Activated naive CD4-positive, alpha-beta T cell treated with anti-CD3 and anti-CD28 coated beads for 36 hours (primary cell): ENCODE measurements at regions of chr12 and their contacts with region 1.

Region 1: GRCh38 chr12:49707128-49707811 is at the start of gene FMNL3:
- DNase-seq: peak; percentile 98
- H3K4me3 Mint-ChIP-seq: peak within 1 kb of the TSS; percentile 89
- H3K27ac Mint-ChIP-seq: peak within 1 kb of the TSS; percentile 85
- H3K4me1 Mint-ChIP-seq: peaks cover 45% of the 10 kb centered on the region
- H3K27me3 Mint-ChIP-seq: peaks cover 2% of the 10 kb centered on the region
- total RNA-seq, gene FMNL3: 20.0 to 20.7 TPM

Region 2: GRCh38 chr12:49366652-49367380 is 340.5 kb before region 1 on chr12:
- CTCF ChIA-PET with region 1: no interaction called
- intact Hi-C with region 1: loop called (anchors 5 kb)
- DNase-seq: peak; percentile 90
- H3K4me3 Mint-ChIP-seq: peak overlapping the region; percentile 95
- H3K27ac Mint-ChIP-seq: peak overlapping the region; percentile 95
- H3K4me1 Mint-ChIP-seq: peaks cover 23% of the 10 kb centered on the region
- H3K27me3 Mint-ChIP-seq: no peaks in the 10 kb centered on the region

Region 3: DNA sequence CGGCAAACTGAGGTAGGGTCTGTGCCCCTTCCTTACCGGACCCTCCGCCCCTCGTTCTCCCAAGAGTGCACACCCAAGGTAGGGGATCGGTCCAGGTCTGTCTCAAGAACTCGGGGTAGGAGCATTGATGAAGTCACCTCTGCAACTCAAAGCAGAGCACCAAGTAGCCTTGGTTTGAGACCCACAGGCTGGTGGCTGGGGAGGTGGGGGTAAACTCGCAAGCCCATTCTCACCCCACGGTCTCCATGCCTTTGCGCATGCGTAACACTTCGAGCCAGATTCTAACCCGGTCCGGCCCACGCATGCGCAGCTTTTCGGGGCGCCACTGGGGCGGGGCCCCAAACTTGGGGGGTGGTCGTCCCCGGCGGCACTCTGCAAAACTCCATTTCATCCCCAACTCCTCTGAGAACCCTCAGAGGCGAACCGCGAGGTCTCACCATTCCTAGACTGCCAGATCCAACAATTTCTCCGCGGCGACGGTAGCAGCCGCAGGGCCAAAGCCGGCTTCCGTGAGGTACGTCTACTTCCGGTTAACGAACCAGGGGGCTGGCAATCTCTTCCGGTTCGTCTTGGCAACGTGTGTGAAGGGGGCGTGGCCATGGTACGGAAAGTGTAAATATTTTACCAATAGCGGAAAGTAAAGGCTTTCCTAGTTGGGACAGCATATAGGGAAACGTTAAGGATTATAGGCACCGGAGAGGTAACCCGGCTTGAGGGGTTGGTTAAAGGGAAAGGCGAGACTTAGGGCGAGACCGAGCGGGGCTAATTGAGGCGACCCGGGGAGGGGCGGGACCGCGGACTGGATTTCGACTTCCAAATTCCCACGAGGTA is 139.4 kb before region 1 on chr12 and contains the start of gene MCRS1:
- CTCF ChIA-PET with region 1: interaction called, 5 read pairs
- intact Hi-C with region 1: loop called (anchors 5 kb)
- DNase-seq: peak; percentile 91
- H3K4me3 Mint-ChIP-seq: peak within 1 kb of the TSS; percentile 99
- H3K27ac Mint-ChIP-seq: peak within 1 kb of the TSS; percentile 98
- H3K4me1 Mint-ChIP-seq: peaks cover 50% of the 10 kb centered on the region
- H3K27me3 Mint-ChIP-seq: no peaks in the 10 kb centered on the region
- total RNA-seq, gene MCRS1: 49.8 to 52.7 TPM

Region 4: GRCh38 chr12:49644620-49644994 is 62.7 kb before region 1 on chr12:
- CTCF ChIA-PET with region 1: interaction called, 450 read pairs
- intact Hi-C with region 1: loop called (anchors 1 kb)
- DNase-seq: peak; percentile 90
- H3K4me3 Mint-ChIP-seq: no peak overlapping the region
- H3K27ac Mint-ChIP-seq: peak overlapping the region; percentile 71
- H3K4me1 Mint-ChIP-seq: peaks cover 29% of the 10 kb centered on the region
- H3K27me3 Mint-ChIP-seq: no peaks in the 10 kb centered on the region

Region 5: DNA sequence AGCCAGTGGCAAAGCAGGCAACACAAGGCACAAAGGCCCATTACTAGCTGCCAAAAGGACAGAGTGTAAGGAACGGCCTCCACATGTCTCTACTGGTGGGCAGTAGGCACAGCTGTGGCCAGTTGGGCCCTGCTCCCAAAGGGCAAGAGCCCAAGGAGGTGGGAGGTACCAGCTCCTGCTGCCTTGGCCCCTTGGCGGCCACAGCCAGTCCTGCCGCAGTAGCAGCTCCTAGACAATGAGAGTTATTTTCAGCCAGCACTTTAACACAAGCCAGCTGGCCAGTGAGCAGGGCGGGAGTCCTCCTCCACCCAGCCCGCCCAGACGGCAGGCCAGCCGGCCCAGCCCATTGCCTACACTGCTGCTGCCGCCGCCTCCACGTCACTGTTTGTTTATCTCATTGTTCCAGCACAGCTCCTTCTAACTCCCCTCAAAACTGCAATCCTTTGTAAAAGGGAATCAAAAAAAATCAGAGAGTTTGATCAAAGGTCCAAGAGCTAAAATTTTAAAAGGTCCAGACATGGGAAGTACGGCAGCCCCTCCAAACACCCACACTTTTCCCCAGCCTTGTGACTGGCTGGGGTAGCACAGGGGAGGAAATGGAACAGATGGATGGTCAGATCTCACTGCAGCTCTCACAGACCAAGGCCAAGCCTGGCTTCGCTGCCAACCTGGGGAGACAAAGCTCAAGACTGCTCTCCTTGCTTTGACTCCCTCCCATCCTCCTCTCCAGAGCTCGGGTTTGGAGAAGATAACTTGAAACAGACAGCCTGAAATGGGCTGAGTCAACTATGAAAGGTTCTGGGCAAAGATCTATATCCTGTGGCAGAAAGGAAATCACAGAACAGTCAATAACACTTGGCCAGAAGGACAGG is 33.6 kb before region 1 on chr12:
- CTCF ChIA-PET with region 1: interaction called, 54 read pairs
- intact Hi-C with region 1: loop called (anchors 1 kb)
- DNase-seq: no peak
- H3K4me3 Mint-ChIP-seq: no peak overlapping the region
- H3K27ac Mint-ChIP-seq: peak overlapping the region; percentile 98
- H3K4me1 Mint-ChIP-seq: peaks cover 85% of the 10 kb centered on the region
- H3K27me3 Mint-ChIP-seq: no peaks in the 10 kb centered on the region

Region 6: DNA sequence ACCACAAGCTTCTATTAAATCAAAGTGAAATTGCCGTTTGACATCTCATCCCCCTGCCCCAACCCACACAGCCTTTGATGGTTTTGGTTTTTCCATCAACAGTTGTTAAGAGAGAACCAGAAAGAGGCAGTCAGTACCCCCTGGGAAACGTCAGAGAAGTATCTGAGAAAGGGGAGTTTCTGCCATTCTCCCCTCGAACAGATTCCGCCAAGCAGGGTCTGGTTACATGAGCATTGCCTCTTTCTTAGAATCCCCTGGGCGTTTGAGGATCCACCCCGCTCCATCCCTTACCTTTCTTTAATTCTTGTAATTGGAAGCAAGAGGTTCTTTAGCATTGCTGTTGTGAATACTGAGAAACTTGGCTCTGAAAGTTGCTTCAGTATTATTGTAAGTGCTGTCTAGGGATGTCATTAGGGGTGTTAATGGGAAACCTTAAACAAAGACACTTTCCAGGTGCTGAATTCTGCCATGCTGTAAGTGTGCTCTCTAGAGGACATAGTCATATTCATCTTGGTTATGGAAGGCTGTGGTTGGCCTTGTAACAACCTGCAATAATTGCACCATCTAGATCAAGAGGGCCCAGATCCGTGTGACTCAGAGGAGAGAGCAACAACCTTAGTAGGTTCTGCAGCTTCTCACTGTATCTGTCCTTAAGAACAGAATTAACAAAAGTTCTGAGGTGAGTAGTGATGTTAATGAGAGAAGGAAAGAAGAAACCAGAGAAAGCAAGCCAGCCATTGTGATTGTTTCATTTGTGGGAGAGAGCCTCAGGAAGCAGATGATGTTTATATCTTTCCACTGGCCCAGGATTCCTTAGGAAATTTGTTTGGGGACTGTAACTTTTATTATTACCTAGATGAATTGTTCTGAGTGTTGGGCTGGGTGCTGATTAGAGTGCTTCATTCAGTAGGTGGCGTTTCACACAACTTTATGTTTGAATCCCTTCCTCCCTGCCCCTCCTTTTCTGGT is 43.0 kb after region 1 on chr12:
- CTCF ChIA-PET with region 1: no interaction called
- intact Hi-C with region 1: loop called (anchors 1 kb)
- DNase-seq: peak; percentile 87
- H3K4me3 Mint-ChIP-seq: peak overlapping the region; percentile 40
- H3K27ac Mint-ChIP-seq: peak overlapping the region; percentile 94
- H3K4me1 Mint-ChIP-seq: peaks cover 83% of the 10 kb centered on the region
- H3K27me3 Mint-ChIP-seq: no peaks in the 10 kb centered on the region